Lower leg skin (tissue), 4 donors: ENCODE measurements at regions of chr3 and their contacts with region 1.

Region 1: DNA sequence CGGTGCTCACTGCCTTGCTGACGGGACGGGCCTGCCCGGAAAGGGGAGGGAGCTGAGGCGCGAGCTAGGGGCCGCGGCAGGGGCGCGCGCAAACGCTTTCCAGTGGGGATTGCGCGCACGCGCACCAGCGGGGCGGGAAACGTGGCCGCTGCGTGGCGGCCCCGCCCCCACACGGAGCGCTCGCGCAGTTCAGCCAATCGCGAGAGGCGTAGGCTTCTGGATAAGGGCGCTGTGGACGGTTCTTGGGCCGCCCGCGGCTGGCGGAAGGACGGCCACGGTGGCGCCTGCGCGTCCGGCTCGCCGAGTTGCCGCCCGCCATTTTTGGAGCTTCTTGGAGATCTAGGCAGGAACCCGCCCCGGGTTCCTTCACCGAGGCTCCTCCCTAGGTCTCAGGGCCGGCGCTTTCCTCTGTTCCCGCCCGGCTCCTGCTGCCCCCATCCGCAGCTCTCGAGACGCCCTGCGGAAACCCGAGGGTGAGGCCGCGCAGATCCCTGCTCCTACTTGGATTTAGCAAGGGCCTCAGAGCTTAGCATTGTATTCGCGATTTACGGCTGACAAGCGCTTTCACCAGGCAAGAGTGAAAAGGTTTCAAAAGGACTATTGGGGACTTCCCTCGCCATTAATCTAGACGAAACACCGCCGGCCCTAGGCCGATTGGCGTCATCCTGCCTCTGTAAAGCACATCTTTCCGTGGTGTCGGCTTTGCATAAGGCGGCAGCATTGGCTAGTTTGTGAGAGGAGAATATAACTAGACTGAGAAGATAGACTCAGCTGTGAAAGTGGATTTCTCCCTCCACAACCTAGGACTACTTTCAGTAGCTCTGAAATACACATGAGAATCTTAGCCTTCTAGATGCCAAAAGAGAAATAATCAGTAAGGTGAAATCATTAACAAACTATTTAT is 496 bp upstream of the STAG1 start:
- DNase-seq: peak; percentile 97 to 100
- H3K4me3 ChIP-seq: peak overlapping the region; percentile 33
- CTCF ChIP-seq: no peak
- POLR2A ChIP-seq: peak in 1 of 2 donors; percentile 31

Region 2: DNA sequence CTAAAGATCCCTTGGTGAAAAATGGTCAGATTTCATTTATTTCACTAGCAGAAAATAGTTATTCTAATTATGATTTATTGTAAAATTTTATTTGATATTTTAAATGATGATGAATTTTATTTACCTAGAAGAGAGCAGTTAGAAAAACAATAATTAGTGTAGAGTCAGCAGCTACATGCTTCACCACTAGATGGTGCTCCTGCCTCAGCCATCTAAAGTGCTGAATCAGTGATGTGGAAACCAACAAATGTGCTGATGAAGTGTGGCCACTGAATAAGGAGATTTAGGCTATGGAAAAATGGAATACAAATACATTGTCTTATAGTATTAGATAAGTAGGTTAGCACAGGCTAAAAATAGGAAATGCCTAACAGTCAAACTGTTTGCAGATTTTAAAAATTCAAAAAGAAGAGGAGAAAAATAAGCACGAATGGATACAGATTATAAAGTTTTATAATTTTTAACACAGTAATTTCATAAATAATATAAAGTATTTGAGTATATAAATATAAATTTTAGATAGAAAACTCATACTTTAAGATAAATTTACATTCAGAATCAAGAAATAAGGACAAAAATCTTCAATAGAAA is 677.4 kb before region 1 on chr3:
- intact Hi-C with region 1: loop called (anchors 10 kb)
- DNase-seq: peak in 1 of 2 donors; percentile 82
- H3K4me3 ChIP-seq: no peak overlapping the region
- CTCF ChIP-seq: peak in 1 of 3 donors; percentile 70
- POLR2A ChIP-seq: no peak

Region 3: DNA sequence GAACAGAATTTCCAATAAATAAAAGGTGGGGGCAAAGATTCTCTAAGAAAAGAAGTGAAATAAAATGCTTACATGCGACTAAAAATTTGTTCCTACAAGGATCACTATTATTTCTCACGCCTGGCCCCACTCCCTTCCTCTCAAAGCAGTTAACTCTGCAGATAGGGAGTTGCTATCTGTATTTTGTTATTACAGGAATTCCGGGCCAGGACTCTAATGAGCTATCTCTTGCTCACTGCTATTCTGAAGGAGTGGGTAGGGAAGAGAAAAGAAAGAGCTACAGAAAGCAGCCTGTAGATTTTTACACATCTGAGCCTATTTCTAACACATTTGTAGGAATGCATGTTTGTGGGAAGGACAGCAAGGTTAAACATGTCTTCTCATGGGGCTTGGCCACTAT is 362.1 kb before region 1 on chr3:
- intact Hi-C with region 1: loop called (anchors 5 kb)
- DNase-seq: no peak
- H3K4me3 ChIP-seq: no peak overlapping the region
- CTCF ChIP-seq: no peak
- POLR2A ChIP-seq: no peak